CD4-positive, alpha-beta memory T cell (primary cell): ENCODE measurements at regions of chr20 and their contacts with region 1.

Region 1: GRCh38 chr20:50504231-50504823 is 5.9 kb upstream of the PTPN1 start:
- DNase-seq: peak in 1 of 5 donors; percentile 22
- H3K4me3 ChIP-seq: no peak overlapping the region
- H3K4me3 Mint-ChIP-seq: no peak overlapping the region
- H3K27ac ChIP-seq: no peak overlapping the region
- H3K27ac Mint-ChIP-seq: peak overlapping the region in 2 of 7 donors; percentile 32 to 87
- H3K4me1 ChIP-seq: peaks cover 1% of the 10 kb centered on the region
- H3K4me1 Mint-ChIP-seq: peaks cover 0 to 11% (median 3%) of the 10 kb centered on the region in 4 donors
- H3K27me3 ChIP-seq: no peaks in the 10 kb centered on the region
- H3K27me3 Mint-ChIP-seq: no peaks in the 10 kb centered on the region

Region 2: DNA sequence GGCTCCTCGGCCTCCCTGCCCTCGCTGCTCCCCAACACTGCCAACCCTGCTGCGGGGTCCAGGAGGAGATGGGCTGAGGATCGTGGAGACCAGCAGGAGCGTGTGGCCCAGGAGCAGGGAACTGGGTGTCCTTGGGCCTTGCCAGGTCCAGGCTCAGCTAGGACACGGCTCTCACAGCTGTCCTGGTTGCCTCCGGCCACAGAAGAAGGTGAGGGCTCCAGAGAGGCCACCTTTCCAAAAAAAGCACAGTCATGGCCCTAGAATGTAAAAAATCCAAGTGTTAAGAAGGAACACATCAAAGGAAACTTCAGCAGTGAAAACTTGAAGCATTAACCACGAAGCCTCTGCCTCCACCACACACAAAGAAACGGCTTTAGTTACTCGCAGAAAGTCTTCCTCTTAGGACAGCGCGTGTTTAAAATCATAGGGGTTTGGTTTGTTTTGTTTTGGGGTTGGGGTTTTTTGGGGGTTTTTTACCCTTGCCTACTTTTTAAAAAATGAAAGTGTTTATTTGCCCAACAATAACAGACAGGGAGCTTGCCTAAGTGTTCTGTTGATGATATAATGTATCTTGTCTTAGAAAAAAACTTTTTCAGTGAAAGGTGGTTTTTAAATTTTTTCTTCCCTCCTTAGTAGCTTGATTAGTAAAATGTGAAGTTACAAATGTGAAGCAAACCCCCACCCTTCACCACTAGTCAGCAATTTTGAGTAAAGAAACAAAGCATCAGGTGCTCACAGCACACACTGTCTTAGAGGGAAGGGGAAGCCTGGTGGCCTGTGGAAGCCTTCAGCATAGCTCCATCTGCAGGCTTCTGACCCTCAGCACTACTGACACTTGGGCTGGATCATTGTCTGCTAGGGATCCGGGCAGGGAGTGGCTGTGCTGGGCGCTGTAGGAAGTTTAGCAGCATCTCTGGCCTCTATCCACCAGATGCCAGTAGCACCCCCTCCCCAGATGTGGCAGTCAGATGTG is 65.8 kb after region 1 on chr20:
- CTCF ChIA-PET with region 1: interaction called, 244 read pairs
- POLR2A ChIA-PET with region 1: interaction called, 6 read pairs
- intact Hi-C with region 1: loop called (anchors 1 kb)
- DNase-seq: peak; percentile 30 to 66 (median 39)
- H3K4me3 ChIP-seq: no peak overlapping the region
- H3K4me3 Mint-ChIP-seq: peak overlapping the region in 6 of 8 donors; percentile 5 to 81 (median 56)
- H3K27ac ChIP-seq: no peak overlapping the region
- H3K27ac Mint-ChIP-seq: peak overlapping the region; percentile 68 to 86 (median 84)
- H3K4me1 ChIP-seq: peaks cover 36% of the 10 kb centered on the region
- H3K4me1 Mint-ChIP-seq: peaks cover 39 to 89% (median 65%) of the 10 kb centered on the region in 4 donors
- H3K27me3 ChIP-seq: no peaks in the 10 kb centered on the region
- H3K27me3 Mint-ChIP-seq: no peaks in the 10 kb centered on the region

Region 3: DNA sequence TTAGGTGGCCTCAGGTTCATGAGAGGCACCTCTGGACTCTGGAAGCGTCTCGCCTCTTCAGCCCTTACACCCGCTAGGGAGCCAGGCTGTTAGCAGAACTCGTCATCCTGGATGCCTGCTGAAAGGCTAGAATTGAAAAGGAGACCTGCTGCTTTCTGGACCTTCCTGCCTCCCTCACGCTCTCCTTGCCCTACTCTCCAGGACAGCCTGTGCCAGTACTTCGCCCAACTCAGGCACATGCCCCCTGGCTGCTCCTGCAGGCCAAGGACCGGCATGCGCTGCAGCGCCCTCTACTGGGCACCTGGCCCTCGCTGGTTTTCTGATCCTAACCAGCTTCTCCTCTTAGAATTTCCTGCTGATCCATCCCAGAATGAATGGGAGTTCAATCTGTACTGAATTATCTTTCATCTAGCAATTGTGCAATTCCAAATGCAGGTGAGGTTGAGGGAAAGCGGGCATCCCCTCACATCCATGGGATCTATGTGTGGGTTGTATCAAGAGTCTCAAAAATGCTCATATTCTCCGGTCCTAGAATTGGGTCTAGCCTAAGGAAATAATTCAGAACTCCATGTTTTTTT is 83.8 kb after region 1 on chr20:
- CTCF ChIA-PET with region 1: interaction called, 11 read pairs
- POLR2A ChIA-PET with region 1: interaction called, 3 read pairs
- intact Hi-C with region 1: no loop called
- DNase-seq: peak; percentile 59 to 70 (median 65)
- H3K4me3 ChIP-seq: no peak overlapping the region
- H3K4me3 Mint-ChIP-seq: no peak overlapping the region
- H3K27ac ChIP-seq: no peak overlapping the region
- H3K27ac Mint-ChIP-seq: peak overlapping the region in 4 of 7 donors; percentile 40 to 83 (median 62)
- H3K4me1 ChIP-seq: no peaks in the 10 kb centered on the region
- H3K4me1 Mint-ChIP-seq: peaks cover 1 to 15% (median 4%) of the 10 kb centered on the region in 4 donors
- H3K27me3 ChIP-seq: no peaks in the 10 kb centered on the region
- H3K27me3 Mint-ChIP-seq: no peaks in the 10 kb centered on the region